ENCODE measurements at regions of chr10 and their contacts with region 1.

Region 1: GRCh38 chr10:29257106-29257783 is 31.6 kb upstream of the LYZL1 start:
- H3K4me3 ChIP-seq: no peak overlapping the region
- H3K27ac ChIP-seq: peak overlapping the region; percentile 65
- H3K4me1 ChIP-seq: peaks cover 45% of the 10 kb centered on the region
- CTCF ChIP-seq: no peak

Region 2: GRCh38 chr10:29098982-29099381 is 158.3 kb before region 1 on chr10:
- CTCF ChIA-PET with region 1: no interaction called
- POLR2A ChIA-PET with region 1: no interaction called
- H3K4me3 ChIP-seq: no peak overlapping the region
- H3K27ac ChIP-seq: no peak overlapping the region
- H3K4me1 ChIP-seq: no peaks in the 10 kb centered on the region; the same call in 1 of the 2 replicates
- CTCF ChIP-seq: no peak

Region 3: DNA sequence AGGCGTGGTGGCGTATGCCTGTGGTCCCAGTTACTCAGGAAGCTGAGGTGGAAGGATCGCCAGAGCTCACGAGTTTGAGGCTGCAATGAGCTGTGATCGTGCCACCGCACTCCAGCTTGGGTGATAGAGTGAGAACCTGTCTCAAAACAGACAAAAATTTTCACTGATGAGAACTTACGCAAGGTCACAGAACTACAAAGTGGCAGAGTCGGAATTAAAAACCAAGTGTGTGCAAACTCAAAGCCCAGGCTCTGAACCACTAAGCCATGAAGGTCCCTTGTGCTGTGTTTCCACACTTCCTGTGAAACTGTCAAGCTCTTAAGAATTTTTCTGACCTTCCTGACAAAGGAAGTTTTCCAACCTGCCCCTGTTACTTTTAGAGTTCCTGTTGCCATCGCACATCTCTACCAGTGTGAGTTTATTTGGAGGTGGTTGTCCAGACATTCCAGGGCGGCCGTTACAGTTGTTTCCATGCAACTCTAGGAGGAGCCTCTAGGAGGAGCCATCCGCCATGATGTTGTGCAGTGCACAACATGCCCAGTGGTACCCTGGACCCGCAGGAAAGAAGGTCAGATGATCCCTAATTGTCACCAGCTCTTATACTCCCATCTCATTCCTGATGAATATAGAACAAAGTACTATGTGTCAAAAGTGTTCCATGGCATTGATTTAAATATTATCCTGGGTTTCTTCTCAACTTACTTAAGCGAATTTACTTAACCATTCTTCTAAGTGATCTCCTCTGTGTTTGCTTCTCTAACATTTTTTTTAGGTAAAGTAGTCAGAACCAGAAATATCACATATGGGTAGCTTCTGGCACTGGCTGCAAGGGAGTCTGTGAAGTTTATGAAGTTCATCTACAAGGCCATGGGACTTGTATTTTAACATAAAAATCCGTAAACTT is 17.4 kb before region 1 on chr10:
- CTCF ChIA-PET with region 1: interaction called, 41 read pairs
- POLR2A ChIA-PET with region 1: interaction called, 3 read pairs
- H3K4me3 ChIP-seq: no peak overlapping the region
- H3K27ac ChIP-seq: no peak overlapping the region
- H3K4me1 ChIP-seq: no peaks in the 10 kb centered on the region
- CTCF ChIP-seq: no peak